ENCODE measurements at regions of chr2 and their contacts with region 1.

Region 1: DNA sequence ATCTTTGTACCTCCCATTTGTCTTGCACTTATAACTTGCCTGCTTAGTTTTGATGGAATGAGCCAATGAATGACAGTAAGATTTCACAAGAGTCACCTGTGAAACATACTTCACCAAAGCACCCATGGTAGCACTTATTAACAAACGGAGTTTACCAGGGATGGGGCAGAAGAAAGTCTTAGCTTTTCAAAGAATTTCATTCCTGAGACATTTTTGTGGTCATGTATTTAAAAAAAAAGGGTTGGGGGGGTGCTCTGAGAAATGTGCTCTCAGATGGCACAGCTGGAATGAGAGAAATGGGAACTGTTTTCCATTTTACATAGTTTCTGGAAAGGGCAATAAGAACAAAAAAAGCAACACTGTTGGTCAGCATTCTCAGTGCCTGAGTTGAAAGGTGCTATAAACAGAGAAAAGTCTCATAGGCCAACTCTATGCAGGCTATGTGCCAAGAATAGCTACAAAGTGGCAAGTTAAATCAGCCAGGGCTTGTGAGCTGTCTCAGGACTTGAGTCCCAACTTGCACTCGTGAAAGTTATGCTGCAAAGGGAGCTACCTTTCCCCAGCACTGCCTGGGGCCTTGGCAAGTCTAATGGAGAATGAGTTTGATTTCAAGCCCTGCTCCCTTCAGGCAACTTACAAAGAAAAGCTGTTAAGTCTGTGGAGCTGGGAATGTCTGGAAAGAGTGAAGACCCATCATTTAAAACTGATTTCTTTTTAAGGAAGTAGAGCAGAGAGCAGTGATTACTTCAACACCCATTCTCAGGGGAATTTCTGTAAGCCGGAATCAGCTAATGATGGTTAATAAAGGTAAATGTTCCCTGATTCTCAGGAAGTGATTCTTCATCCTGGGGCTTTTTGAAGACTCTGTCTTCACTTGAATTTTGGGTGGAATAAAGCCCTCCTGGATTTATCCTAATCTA is 170.6 kb downstream of the SLC8A1 start:
- DNase-seq: peak; percentile 12 to 79
- H3K4me3 ChIP-seq: peak overlapping the region in 1 of 2 donors; percentile 53
- H3K27ac ChIP-seq: peak overlapping the region; percentile 52 to 67
- H3K4me1 ChIP-seq: peaks cover 0 to 24% of the 10 kb centered on the region in 2 donors
- H3K27me3 ChIP-seq: no peaks in the 10 kb centered on the region
- CTCF ChIP-seq: no peak

Region 2: GRCh38 chr2:39816845-39817244 is 464.4 kb before region 1 on chr2:
- intact Hi-C with region 1: no loop called
- DNase-seq: no peak
- H3K4me3 ChIP-seq: no peak overlapping the region
- H3K27ac ChIP-seq: no peak overlapping the region
- H3K4me1 ChIP-seq: no peaks in the 10 kb centered on the region
- H3K27me3 ChIP-seq: no peaks in the 10 kb centered on the region
- CTCF ChIP-seq: no peak

Region 3: DNA sequence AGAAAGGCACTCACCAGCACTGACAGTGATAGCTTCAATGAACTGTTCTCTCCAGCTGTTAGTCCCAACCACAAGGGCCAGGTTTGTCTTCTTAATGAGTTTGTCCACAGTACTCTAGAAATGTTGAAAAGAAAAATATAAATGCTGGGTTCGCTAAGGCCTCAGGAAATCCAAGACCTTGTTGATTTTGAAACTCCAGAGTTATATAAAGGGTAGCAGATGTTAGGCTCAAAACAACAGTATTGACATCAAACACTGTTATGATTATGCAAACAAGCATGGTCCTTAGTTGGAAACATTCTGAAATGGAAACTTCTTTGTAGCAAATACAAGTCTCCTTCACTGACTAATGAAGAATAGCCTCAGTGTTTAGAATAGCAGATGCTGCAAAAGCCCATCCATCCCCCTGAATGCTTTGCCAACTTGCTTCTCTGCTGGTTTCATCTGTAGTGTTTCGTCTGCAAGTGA is 120.5 kb before region 1 on chr2:
- intact Hi-C with region 1: no loop called
- DNase-seq: no peak
- H3K4me3 ChIP-seq: no peak overlapping the region
- H3K27ac ChIP-seq: no peak overlapping the region
- H3K4me1 ChIP-seq: no peaks in the 10 kb centered on the region
- H3K27me3 ChIP-seq: no peaks in the 10 kb centered on the region
- CTCF ChIP-seq: no peak

Region 4: GRCh38 chr2:40244675-40245074 is 36.6 kb before region 1 on chr2:
- intact Hi-C with region 1: loop called (anchors 5 kb)
- DNase-seq: peak in 1 of 2 donors; percentile 70
- H3K4me3 ChIP-seq: no peak overlapping the region
- H3K27ac ChIP-seq: peak overlapping the region in 1 of 2 donors; percentile 34
- H3K4me1 ChIP-seq: peaks cover 0 to 12% of the 10 kb centered on the region in 2 donors
- H3K27me3 ChIP-seq: no peaks in the 10 kb centered on the region
- CTCF ChIP-seq: peak; percentile 26 to 57 (median 53)

Region 5: GRCh38 chr2:40256649-40257048 is 24.6 kb before region 1 on chr2:
- intact Hi-C with region 1: no loop called
- DNase-seq: no peak
- H3K4me3 ChIP-seq: no peak overlapping the region
- H3K27ac ChIP-seq: no peak overlapping the region
- H3K4me1 ChIP-seq: no peaks in the 10 kb centered on the region
- H3K27me3 ChIP-seq: no peaks in the 10 kb centered on the region
- CTCF ChIP-seq: no peak

Region 6: GRCh38 chr2:40348665-40349064 is 67.4 kb after region 1 on chr2:
- intact Hi-C with region 1: loop called (anchors 2 kb)
- DNase-seq: no peak
- H3K4me3 ChIP-seq: no peak overlapping the region
- H3K27ac ChIP-seq: no peak overlapping the region
- H3K4me1 ChIP-seq: peaks cover 0 to 31% of the 10 kb centered on the region in 2 donors
- H3K27me3 ChIP-seq: no peaks in the 10 kb centered on the region
- CTCF ChIP-seq: no peak

Region 7: GRCh38 chr2:40431600-40431955 is 150.3 kb after region 1 on chr2:
- intact Hi-C with region 1: loop called (anchors 5 kb)
- DNase-seq: peak in 1 of 2 donors; percentile 69
- H3K4me3 ChIP-seq: no peak overlapping the region
- H3K27ac ChIP-seq: peak overlapping the region; percentile 20 to 63
- H3K4me1 ChIP-seq: peaks cover 8 to 31% of the 10 kb centered on the region in 2 donors
- H3K27me3 ChIP-seq: no peaks in the 10 kb centered on the region
- CTCF ChIP-seq: no peak

Region 8: DNA sequence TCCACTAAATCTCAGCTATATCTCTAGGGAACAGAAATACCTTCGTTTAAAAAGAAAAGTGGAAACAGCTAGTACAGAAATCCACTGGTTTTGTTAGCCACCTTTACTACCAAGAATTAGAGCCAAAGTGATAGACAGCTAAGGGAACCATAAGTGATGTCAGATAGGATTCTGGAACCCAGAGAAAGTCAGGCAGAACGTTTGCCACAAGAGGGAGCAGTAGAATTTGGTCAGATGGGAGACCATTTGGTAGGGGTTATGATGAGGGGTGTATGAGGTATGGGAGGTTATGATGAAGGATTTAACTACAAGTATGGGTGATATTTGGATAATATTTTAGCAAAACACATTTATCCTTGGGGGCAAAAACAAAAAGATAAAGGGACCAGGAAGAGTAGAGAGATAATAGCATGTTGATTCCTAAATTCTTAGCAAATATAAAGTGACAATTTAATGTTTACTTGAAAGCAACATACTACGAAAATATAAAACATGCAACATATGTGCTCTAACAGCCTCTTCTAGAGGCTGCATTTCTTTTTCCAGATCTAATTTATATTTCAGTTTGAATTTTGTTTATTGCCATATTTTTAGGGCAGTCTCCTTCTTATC is 167.3 kb after region 1 on chr2:
- intact Hi-C with region 1: loop called (anchors 1 kb)
- DNase-seq: no peak
- H3K4me3 ChIP-seq: no peak overlapping the region
- H3K27ac ChIP-seq: no peak overlapping the region
- H3K4me1 ChIP-seq: peaks cover 2 to 7% of the 10 kb centered on the region in 2 donors
- H3K27me3 ChIP-seq: no peaks in the 10 kb centered on the region
- CTCF ChIP-seq: peak; percentile 14 to 52 (median 14)